ENCODE measurements at regions of chr20 and their contacts with region 1.

Region 1: GRCh38 chr20:13105864-13106457 is 97.2 kb downstream of the SPTLC3 start:
- DNase-seq: peak in 1 of 2 donors; percentile 58
- H3K4me3 ChIP-seq: no peak overlapping the region
- H3K27ac ChIP-seq: no peak overlapping the region
- H3K4me1 ChIP-seq: peaks cover 0 to 5% (median 0%) of the 10 kb centered on the region in 4 donors
- H3K27me3 ChIP-seq: no peaks in the 10 kb centered on the region
- CTCF ChIP-seq: peak in 5 of 7 experiments; percentile 17 to 71 (median 56)
- EP300 ChIP-seq: no peak
- POLR2A ChIP-seq: no peak

Region 2: DNA sequence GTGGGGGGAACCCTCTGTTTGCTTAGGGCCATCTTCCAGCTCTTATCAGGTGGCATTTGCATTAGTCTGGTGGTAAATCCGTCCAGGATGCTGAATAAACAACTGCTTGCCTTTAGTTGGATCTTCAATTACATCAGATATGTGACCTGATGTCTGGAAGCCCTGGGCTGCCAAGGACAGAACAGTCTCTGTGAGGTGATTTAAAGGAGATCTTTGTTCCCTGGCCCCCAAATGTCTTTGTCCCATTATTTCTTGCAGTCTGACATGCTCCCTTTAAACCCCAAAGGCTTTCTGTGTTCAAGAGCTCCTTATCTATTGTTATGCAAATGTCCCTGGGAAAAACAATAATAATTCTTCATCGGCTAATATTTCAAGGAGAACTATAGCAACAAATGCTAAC is 181.8 kb before region 1 on chr20:
- intact Hi-C with region 1: loop called (anchors 5 kb)
- DNase-seq: no peak
- H3K4me3 ChIP-seq: no peak overlapping the region
- H3K27ac ChIP-seq: no peak overlapping the region
- H3K4me1 ChIP-seq: peaks cover 0 to 7% (median 2%) of the 10 kb centered on the region in 4 donors
- H3K27me3 ChIP-seq: no peaks in the 10 kb centered on the region
- CTCF ChIP-seq: no peak
- EP300 ChIP-seq: no peak
- POLR2A ChIP-seq: no peak

Region 3: GRCh38 chr20:12966468-12967341 is 139.3 kb before region 1 on chr20:
- intact Hi-C with region 1: loop called (anchors 10 kb)
- DNase-seq: peak in 1 of 2 donors; percentile 58
- H3K4me3 ChIP-seq: no peak overlapping the region
- H3K27ac ChIP-seq: no peak overlapping the region
- H3K4me1 ChIP-seq: no peaks in the 10 kb centered on the region
- H3K27me3 ChIP-seq: no peaks in the 10 kb centered on the region
- CTCF ChIP-seq: peak in 1 of 7 experiments; percentile 9
- EP300 ChIP-seq: no peak
- POLR2A ChIP-seq: no peak

Region 4: GRCh38 chr20:13186043-13186774 is 80.2 kb after region 1 on chr20:
- intact Hi-C with region 1: no loop called
- DNase-seq: no peak
- H3K4me3 ChIP-seq: no peak overlapping the region
- H3K27ac ChIP-seq: no peak overlapping the region
- H3K4me1 ChIP-seq: no peaks in the 10 kb centered on the region
- H3K27me3 ChIP-seq: no peaks in the 10 kb centered on the region
- CTCF ChIP-seq: no peak
- EP300 ChIP-seq: no peak
- POLR2A ChIP-seq: no peak

Region 5: GRCh38 chr20:13202565-13202964 is 96.6 kb after region 1 on chr20:
- intact Hi-C with region 1: no loop called
- DNase-seq: peak in 1 of 2 donors; percentile 4
- H3K4me3 ChIP-seq: no peak overlapping the region
- H3K27ac ChIP-seq: no peak overlapping the region
- H3K4me1 ChIP-seq: no peaks in the 10 kb centered on the region
- H3K27me3 ChIP-seq: no peaks in the 10 kb centered on the region
- CTCF ChIP-seq: no peak
- EP300 ChIP-seq: no peak
- POLR2A ChIP-seq: no peak

Measured in stomach (tissue), 19 donors.